IMR-90 (cell line): ENCODE measurements at regions of chr1 and their contacts with region 1.

Region 1: GRCh38 chr1:198088360-198089071 is 68.3 kb upstream of the NEK7 start:
- DNase-seq: peak; percentile 75
- ATAC-seq: peak; percentile 94
- H3K4me3 ChIP-seq: peak overlapping the region; percentile 23; the same call in 1 of the 2 replicates
- H3K27ac ChIP-seq: peak overlapping the region; percentile 45
- H3K4me1 ChIP-seq: peaks cover 3% of the 10 kb centered on the region
- H3K27me3 ChIP-seq: no peaks in the 10 kb centered on the region
- CTCF ChIP-seq: peak; percentile 70
- POLR2A ChIP-seq: no peak
- RAD21 ChIP-seq: peak; percentile 75

Region 2: GRCh38 chr1:197614916-197615692 is 473.4 kb before region 1 on chr1:
- CTCF ChIA-PET with region 1: no interaction called
- POLR2A ChIA-PET with region 1: no interaction called
- dilution Hi-C with region 1: no loop called
- in situ Hi-C with region 1: no loop called
- intact Hi-C with region 1: loop called (anchors 5 kb)
- DNase-seq: peak; percentile 51
- ATAC-seq: peak; percentile 91
- H3K4me3 ChIP-seq: no peak overlapping the region
- H3K27ac ChIP-seq: no peak overlapping the region
- H3K4me1 ChIP-seq: 0 out of 2 replicates have a peak, but pooled peaks cover 2% of the 10 kb centered on the region
- H3K27me3 ChIP-seq: no peaks in the 10 kb centered on the region
- CTCF ChIP-seq: peak; percentile 66
- POLR2A ChIP-seq: no peak
- RAD21 ChIP-seq: peak; percentile 78

Region 3: GRCh38 chr1:197725044-197725443 is 363.5 kb before region 1 on chr1:
- CTCF ChIA-PET with region 1: no interaction called
- POLR2A ChIA-PET with region 1: no interaction called
- dilution Hi-C with region 1: no loop called
- in situ Hi-C with region 1: no loop called
- intact Hi-C with region 1: no loop called
- DNase-seq: peak; percentile 31
- ATAC-seq: no peak
- H3K4me3 ChIP-seq: no peak overlapping the region
- H3K27ac ChIP-seq: no peak overlapping the region
- H3K4me1 ChIP-seq: no peaks in the 10 kb centered on the region
- H3K27me3 ChIP-seq: no peaks in the 10 kb centered on the region
- CTCF ChIP-seq: no peak
- POLR2A ChIP-seq: no peak
- RAD21 ChIP-seq: no peak

Region 4: GRCh38 chr1:198118134-198118533 is 29.6 kb after region 1 on chr1:
- CTCF ChIA-PET with region 1: no interaction called
- POLR2A ChIA-PET with region 1: interaction called, 18 read pairs
- dilution Hi-C with region 1: no loop called
- in situ Hi-C with region 1: no loop called
- intact Hi-C with region 1: no loop called
- DNase-seq: peak; percentile 99
- ATAC-seq: peak; percentile 77
- H3K4me3 ChIP-seq: no peak overlapping the region
- H3K27ac ChIP-seq: peak overlapping the region; percentile 18
- H3K4me1 ChIP-seq: peaks cover 11% of the 10 kb centered on the region
- H3K27me3 ChIP-seq: no peaks in the 10 kb centered on the region
- CTCF ChIP-seq: no peak
- POLR2A ChIP-seq: no peak
- RAD21 ChIP-seq: no peak

Region 5: DNA sequence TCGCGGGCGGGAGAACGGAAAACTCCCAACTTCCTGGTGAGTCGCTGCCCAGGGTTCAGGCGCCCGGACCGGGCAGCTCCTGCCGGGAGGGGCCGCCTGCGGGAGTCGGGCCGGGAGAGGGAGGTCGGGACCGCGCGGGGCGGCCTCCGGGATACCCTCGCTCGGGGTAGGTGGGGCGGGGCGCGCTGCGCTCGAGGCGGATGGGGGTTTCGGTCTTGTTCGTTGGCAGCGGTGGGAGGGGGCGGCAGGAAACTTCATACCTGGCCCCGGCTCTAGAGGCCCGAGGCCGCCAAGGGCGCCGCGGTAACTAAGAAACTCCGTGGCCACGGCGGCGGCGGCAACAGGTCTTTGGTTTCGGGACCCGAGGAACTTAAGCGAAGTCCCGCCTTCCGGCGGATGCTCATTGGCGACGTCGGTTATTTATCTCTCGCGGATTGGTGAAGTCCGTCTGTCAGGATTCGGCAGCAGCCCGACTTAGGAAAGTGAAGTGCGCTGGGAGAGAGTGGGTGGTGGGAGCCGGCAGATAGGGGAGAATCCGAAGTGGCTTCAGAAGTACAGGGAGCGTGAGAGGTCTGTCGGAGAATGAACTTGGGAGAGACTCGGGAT is 68.8 kb after region 1 on chr1:
- CTCF ChIA-PET with region 1: no interaction called
- POLR2A ChIA-PET with region 1: no interaction called
- dilution Hi-C with region 1: no loop called
- in situ Hi-C with region 1: no loop called
- intact Hi-C with region 1: loop called (anchors 1 kb)
- DNase-seq: peak; percentile 97
- ATAC-seq: peak; percentile 62
- H3K4me3 ChIP-seq: peak overlapping the region; percentile 77
- H3K27ac ChIP-seq: peak overlapping the region; percentile 93
- H3K4me1 ChIP-seq: peaks cover 6% of the 10 kb centered on the region
- H3K27me3 ChIP-seq: no peaks in the 10 kb centered on the region
- CTCF ChIP-seq: no peak
- POLR2A ChIP-seq: no peak; the same call in 1 of the 2 replicates
- RAD21 ChIP-seq: no peak

Region 6: GRCh38 chr1:198275597-198275996 is 187.1 kb after region 1 on chr1:
- CTCF ChIA-PET with region 1: no interaction called
- POLR2A ChIA-PET with region 1: no interaction called
- dilution Hi-C with region 1: no loop called
- in situ Hi-C with region 1: no loop called
- intact Hi-C with region 1: loop called (anchors 10 kb)
- DNase-seq: no peak
- ATAC-seq: no peak
- H3K4me3 ChIP-seq: no peak overlapping the region
- H3K27ac ChIP-seq: no peak overlapping the region
- H3K4me1 ChIP-seq: peaks cover 5% of the 10 kb centered on the region
- H3K27me3 ChIP-seq: no peaks in the 10 kb centered on the region
- CTCF ChIP-seq: no peak; the same call in 1 of the 2 replicates
- POLR2A ChIP-seq: no peak
- RAD21 ChIP-seq: 0 out of 2 replicates have a peak, but pooled peaks have one; percentile 21

Region 7: GRCh38 chr1:198359024-198359653 is 270.6 kb after region 1 on chr1:
- CTCF ChIA-PET with region 1: no interaction called
- POLR2A ChIA-PET with region 1: no interaction called
- dilution Hi-C with region 1: no loop called
- in situ Hi-C with region 1: no loop called
- intact Hi-C with region 1: loop called (anchors 10 kb)
- DNase-seq: peak; percentile 16
- ATAC-seq: no peak
- H3K4me3 ChIP-seq: no peak overlapping the region
- H3K27ac ChIP-seq: no peak overlapping the region
- H3K4me1 ChIP-seq: no peaks in the 10 kb centered on the region
- H3K27me3 ChIP-seq: no peaks in the 10 kb centered on the region
- CTCF ChIP-seq: peak; percentile 45
- POLR2A ChIP-seq: no peak
- RAD21 ChIP-seq: peak; percentile 24; the same call in 1 of the 2 replicates

Region 8: GRCh38 chr1:198465201-198466144 is 377.0 kb after region 1 on chr1:
- CTCF ChIA-PET with region 1: no interaction called
- POLR2A ChIA-PET with region 1: no interaction called
- dilution Hi-C with region 1: no loop called
- in situ Hi-C with region 1: no loop called
- intact Hi-C with region 1: loop called (anchors 1 kb)
- DNase-seq: peak; percentile 70
- ATAC-seq: peak; percentile 88
- H3K4me3 ChIP-seq: no peak overlapping the region
- H3K27ac ChIP-seq: no peak overlapping the region
- H3K4me1 ChIP-seq: peaks cover 4% of the 10 kb centered on the region
- H3K27me3 ChIP-seq: no peaks in the 10 kb centered on the region
- CTCF ChIP-seq: peak; percentile 74
- POLR2A ChIP-seq: no peak
- RAD21 ChIP-seq: peak; percentile 85